H1 (cell line): ENCODE measurements at regions of chr10 and their contacts with region 1.

Region 1: DNA sequence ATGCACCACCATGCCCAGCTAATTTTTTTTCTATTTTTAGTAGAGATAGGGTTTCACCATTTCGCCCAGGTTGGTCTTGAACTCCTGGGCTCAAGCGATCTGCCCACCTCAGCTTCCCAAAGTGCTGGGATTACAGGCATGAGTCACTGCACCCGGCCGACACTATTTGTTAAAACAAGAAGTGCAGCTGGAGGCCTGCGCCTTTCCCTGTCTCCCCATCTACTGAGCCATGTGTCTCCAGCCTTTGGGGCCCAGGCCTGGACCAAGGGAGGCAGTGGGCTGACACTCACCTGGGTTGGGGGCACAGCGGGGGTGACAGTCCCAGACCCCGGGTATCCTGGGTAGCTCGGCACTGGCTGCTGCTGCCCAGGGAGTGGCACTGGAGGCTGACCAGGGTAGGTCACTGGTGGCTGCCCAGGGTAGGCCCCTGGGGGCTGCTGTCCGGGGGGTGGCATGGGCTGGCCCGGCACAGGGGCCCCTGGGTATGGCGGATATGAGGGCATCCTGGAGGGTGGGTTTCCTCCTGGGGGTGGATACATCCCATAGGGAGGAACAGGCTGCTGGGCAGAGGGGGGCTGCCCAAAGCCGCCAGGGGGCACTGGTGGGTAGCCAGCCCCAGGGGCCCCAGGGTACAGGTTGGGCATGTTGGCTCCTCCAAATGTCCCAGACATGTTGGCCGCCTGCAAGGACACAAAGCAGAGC is 36.3 kb downstream of the PLAC9 start:
- DNase-seq: peak in 1 of 2 experiments; percentile 77
- H3K4me3 ChIP-seq: no peak overlapping the region
- H3K27ac ChIP-seq: no peak overlapping the region
- H3K4me1 ChIP-seq: peaks cover 4 to 16% (median 9%) of the 10 kb centered on the region in 4 experiments
- H3K27me3 ChIP-seq: no peaks in the 10 kb centered on the region
- CTCF ChIP-seq: peak; percentile 60 to 65 (median 62)
- EP300 ChIP-seq: no peak
- POLR2A ChIP-seq: no peak
- RAD21 ChIP-seq: peak; percentile 63 to 72

Region 2: GRCh38 chr10:80205478-80206276 is 36.8 kb after region 1 on chr10 and contains the start of gene ANXA11:
- CTCF ChIA-PET with region 1: interaction called, 20 read pairs
- POLR2A ChIA-PET with region 1: interaction called, 8 read pairs
- DNase-seq: peak; percentile 62 to 87
- H3K4me3 ChIP-seq: peak within 1 kb of the TSS; percentile 65 to 81 (median 75)
- H3K27ac ChIP-seq: no peak within 1 kb of the TSS; the same call in 1 of the 2 replicates
- H3K4me1 ChIP-seq: peaks cover 10 to 17% (median 13%) of the 10 kb centered on the region in 4 experiments
- H3K27me3 ChIP-seq: peaks cover 0 to 17% (median 10%) of the 10 kb centered on the region in 4 experiments; a peak in 6 of 7 replicates
- CTCF ChIP-seq: no peak
- EP300 ChIP-seq: no peak
- POLR2A ChIP-seq: peak in 1 of 2 experiments; percentile 78; a peak in 2 of 3 replicates
- RAD21 ChIP-seq: no peak
- total RNA-seq, gene ANXA11: 70.6 and 84.9 TPM in 2 replicates

Region 3: GRCh38 chr10:80280973-80281691 is 112.3 kb after region 1 on chr10:
- CTCF ChIA-PET with region 1: no interaction called
- POLR2A ChIA-PET with region 1: no interaction called
- DNase-seq: no peak
- H3K4me3 ChIP-seq: no peak overlapping the region
- H3K27ac ChIP-seq: no peak overlapping the region
- H3K4me1 ChIP-seq: peaks cover 0 to 7% (median 0%) of the 10 kb centered on the region in 4 experiments; a peak in 2 of 7 replicates
- H3K27me3 ChIP-seq: no peaks in the 10 kb centered on the region; a peak in 2 of 7 replicates
- CTCF ChIP-seq: no peak
- EP300 ChIP-seq: no peak
- POLR2A ChIP-seq: no peak
- RAD21 ChIP-seq: no peak